ENCODE measurements at regions of chr3 and their contacts with region 1.

Region 1: DNA sequence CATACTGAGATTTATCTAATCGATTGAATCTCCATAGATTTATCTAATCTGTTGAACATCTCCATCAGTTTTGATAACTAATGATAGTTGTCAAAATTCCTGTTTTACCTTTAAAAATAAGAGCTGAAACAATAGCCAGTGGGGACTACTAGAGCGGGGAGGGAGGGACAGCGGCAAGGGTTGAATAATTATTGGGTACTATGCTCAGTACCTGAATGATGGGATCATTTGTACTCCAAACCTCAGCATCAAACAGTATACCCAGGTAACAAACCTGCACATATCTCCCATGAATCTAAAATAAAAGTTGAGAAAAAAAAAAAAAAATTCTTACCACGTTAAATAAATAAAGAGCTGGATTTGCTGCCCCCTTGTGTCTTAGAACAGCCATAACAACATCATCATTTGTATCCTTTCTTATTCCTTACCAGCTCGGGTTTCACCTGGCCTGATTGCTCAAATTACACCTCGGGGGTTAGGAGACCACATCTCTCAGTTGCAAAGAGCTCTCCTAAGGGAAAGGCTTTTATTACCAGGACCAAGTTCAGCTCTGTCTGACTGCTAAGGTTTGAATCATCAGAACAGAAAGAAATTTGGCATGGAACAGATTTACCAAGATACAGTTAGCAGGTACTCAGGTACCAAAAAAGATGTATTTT is 25.7 kb upstream of the RPL39L start:
- DNase-seq: peak; percentile 51
- CTCF ChIP-seq: peak; percentile 47

Region 2: DNA sequence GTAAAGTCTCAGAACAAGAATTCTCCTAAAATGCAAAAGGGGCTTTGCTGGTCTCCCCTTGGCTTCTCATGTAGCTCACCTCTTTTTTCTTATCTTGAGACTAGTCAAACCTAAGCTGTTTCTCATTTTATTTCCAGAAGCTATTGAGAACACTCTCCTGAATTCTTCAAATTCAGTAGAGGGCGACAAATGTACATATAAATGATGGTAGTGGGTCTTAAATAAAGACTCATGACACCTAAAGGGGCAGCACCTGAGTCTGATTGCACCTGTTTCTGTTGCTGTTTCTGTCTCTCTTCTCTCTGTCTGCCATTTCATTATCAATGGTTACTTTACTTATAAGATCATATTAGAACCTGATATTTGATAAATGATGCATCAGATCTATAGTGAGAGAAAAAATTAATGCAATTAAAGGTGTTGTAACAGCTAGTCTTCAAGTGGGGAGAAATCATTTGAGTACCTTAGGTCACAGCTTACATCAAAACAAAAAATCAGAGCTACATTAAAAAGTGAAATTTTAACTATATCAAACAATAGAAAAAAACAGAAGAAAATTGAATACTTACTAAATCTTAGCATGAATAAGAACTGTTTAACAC is 315.5 kb before region 1 on chr3:
- CTCF ChIA-PET with region 1: interaction called, 57 read pairs
- POLR2A ChIA-PET with region 1: no interaction called
- DNase-seq: peak; percentile 69
- CTCF ChIP-seq: peak; percentile 61

Region 3: DNA sequence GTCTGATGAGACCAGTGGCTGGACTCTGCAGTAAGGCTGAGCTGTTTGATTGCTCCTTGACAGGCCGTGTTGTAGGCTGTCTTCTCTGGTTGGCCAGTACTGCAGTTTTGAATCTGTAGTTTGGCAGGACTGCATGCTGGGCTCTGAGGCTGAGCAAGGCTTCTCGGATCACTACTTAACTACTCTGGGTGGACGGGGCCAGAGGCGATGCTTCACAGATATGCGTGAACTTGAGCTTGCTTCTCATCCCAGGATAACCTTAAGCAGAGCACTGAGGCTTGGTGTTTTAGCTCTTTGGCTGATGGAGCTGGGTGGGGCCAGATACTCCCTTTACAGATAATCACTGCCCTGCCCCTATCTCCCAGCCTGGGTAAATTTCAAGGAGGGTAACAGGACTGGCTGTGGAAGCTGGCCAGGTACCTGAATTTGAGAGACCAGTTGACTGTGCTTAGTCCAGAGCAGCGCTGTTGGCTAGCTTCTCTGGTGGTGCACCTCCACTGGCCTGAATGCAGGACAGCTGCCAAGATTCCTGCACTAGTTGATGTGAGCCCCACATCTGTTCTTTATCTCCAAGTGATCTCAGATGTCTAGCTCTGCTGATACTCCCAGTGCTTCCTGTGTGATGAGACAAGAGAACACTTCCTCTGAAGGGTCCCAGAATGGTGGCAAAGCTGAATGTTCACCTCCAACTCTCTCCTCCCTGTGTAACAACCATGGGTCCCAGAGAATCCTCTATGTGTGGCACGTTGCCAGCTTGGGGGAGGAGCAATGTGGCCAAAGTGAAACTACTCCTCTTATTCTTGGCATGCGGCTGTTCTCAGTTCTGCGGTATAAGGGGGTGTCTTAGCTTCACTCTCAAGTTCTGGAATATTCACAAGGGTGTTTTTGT is 63.6 kb before region 1 on chr3:
- CTCF ChIA-PET with region 1: interaction called, 19 read pairs
- POLR2A ChIA-PET with region 1: no interaction called
- DNase-seq: no peak
- CTCF ChIP-seq: no peak

Region 4: GRCh38 chr3:187120326-187120725 is 44.7 kb before region 1 on chr3:
- CTCF ChIA-PET with region 1: interaction called, 104 read pairs
- POLR2A ChIA-PET with region 1: no interaction called
- DNase-seq: no peak
- CTCF ChIP-seq: no peak

Region 5: GRCh38 chr3:187382609-187383151 is 217.7 kb after region 1 on chr3:
- CTCF ChIA-PET with region 1: no interaction called
- POLR2A ChIA-PET with region 1: no interaction called
- DNase-seq: no peak
- CTCF ChIP-seq: no peak

Region 6: GRCh38 chr3:187725653-187726370 is 560.8 kb after region 1 on chr3:
- CTCF ChIA-PET with region 1: no interaction called
- POLR2A ChIA-PET with region 1: no interaction called
- DNase-seq: no peak
- CTCF ChIP-seq: no peak